Endothelial cell of umbilical vein (primary cell): ENCODE measurements at regions of chr17 and their contacts with region 1.

Region 1: GRCh38 chr17:80927791-80928216 is 63.8 kb upstream of the CHMP6 start:
- DNase-seq: peak; percentile 96
- H3K4me3 ChIP-seq: no peak overlapping the region
- H3K27ac ChIP-seq: peak overlapping the region; percentile 54
- H3K4me1 ChIP-seq: peaks cover 18% of the 10 kb centered on the region
- H3K27me3 ChIP-seq: no peaks in the 10 kb centered on the region
- CTCF ChIP-seq: peak; percentile 80 to 84
- POLR2A ChIP-seq: no peak

Region 2: GRCh38 chr17:80477647-80478478 is 449.9 kb before region 1 on chr17:
- CTCF ChIA-PET with region 1: interaction called, 14 read pairs
- POLR2A ChIA-PET with region 1: no interaction called
- dilution Hi-C with region 1: no loop called
- intact Hi-C with region 1: no loop called
- DNase-seq: peak; percentile 21
- H3K4me3 ChIP-seq: no peak overlapping the region
- H3K27ac ChIP-seq: no peak overlapping the region
- H3K4me1 ChIP-seq: no peaks in the 10 kb centered on the region
- H3K27me3 ChIP-seq: peaks cover 69 to 74% of the 10 kb centered on the region in 2 experiments
- CTCF ChIP-seq: peak; percentile 8 to 67
- POLR2A ChIP-seq: no peak

Region 3: GRCh38 chr17:80879723-80880647 is 47.8 kb before region 1 on chr17:
- CTCF ChIA-PET with region 1: no interaction called
- POLR2A ChIA-PET with region 1: no interaction called
- dilution Hi-C with region 1: no loop called
- intact Hi-C with region 1: no loop called
- DNase-seq: no peak
- H3K4me3 ChIP-seq: no peak overlapping the region
- H3K27ac ChIP-seq: no peak overlapping the region
- H3K4me1 ChIP-seq: no peaks in the 10 kb centered on the region
- H3K27me3 ChIP-seq: no peaks in the 10 kb centered on the region
- CTCF ChIP-seq: no peak
- POLR2A ChIP-seq: no peak

Region 4: DNA sequence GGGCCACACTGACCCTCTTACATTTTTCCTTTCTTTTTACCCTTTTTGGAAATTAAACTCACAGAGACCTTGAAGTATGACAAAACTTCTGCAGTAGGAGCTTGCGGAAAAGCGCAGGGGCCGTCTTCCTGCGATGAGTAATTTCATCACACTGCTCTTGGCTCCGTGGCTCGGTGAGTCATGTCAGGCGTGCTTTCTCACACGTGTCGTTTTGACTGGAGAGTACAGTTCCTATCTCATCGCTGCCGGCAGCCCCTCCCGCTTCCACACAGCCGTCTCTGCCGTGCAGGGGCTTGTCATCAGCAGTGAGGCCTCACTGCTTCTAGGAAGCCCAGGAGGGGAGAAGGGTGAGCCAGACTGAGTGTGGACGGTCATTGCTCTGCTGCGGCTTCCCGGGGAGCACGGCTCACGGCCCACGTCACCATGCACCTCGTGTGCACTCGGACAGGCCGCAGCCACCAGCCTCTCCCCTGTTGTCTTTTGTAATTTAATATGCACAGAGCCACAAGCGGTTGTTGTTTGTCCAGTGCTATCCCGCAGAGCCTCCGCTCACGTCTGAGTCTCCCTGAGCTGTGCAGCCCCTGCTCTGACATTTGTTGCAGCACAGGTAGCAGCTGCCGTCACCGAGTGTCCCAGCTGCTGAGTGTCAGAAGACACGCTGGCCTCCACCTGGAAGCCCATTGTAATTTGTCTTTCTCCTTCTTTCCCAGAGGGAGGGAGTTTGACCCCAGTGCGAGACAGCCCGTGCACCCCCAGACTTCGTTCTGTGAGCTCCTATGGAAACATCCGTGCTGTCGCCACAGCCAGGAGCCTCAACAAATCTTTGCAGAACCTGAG is 35.6 kb before region 1 on chr17:
- CTCF ChIA-PET with region 1: interaction called, 24 read pairs
- POLR2A ChIA-PET with region 1: no interaction called
- dilution Hi-C with region 1: no loop called
- intact Hi-C with region 1: loop called (anchors 1 kb)
- DNase-seq: peak; percentile 91
- H3K4me3 ChIP-seq: no peak overlapping the region
- H3K27ac ChIP-seq: peak overlapping the region; percentile 79
- H3K4me1 ChIP-seq: peaks cover 28% of the 10 kb centered on the region
- H3K27me3 ChIP-seq: no peaks in the 10 kb centered on the region
- CTCF ChIP-seq: no peak
- POLR2A ChIP-seq: no peak

Region 5: DNA sequence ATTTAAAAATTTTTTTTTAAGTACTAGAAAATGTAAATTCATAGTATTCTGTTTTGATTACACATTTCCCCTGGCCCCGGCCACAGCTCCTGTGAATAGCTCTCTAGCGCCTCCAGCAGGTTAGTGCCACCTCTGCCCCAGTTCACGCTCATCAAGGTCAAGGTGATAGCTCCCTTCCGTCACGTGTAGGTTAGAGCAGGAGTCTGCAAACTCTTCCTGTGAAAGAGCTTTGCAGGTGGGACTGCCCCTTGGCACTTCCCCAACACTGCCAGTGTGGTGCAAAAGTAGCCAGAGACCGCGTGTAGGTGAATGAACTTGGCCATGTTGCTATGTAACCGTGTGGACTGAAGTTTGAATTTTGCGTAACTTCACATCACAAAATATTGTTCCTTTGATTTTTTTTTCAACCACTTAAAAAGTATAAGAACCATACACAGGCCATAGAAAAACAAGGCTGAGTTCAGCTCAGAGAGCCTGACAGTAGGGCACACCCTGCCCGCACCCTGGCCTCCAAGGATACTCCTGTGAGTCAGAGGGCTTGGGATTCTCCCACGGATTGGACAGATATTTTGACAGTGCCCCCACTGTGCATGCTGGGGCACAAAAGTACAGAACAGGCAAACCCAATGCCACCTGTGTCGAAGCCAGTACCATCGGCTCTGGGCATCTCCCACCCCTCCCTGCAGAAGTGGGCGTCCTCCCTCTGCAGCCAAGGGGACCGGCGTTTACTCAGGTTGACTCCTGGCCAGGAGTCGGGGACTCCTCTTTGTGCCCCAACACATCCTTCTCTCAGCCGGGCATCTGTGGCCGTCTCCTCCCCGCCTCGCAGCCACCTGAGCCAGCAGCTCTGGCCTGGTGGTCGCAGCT is 28.2 kb before region 1 on chr17:
- CTCF ChIA-PET with region 1: interaction called, 32 read pairs
- POLR2A ChIA-PET with region 1: no interaction called
- dilution Hi-C with region 1: no loop called
- intact Hi-C with region 1: no loop called
- DNase-seq: peak; percentile 22
- H3K4me3 ChIP-seq: no peak overlapping the region
- H3K27ac ChIP-seq: no peak overlapping the region
- H3K4me1 ChIP-seq: peaks cover 18% of the 10 kb centered on the region
- H3K27me3 ChIP-seq: no peaks in the 10 kb centered on the region
- CTCF ChIP-seq: peak; percentile 53 to 69
- POLR2A ChIP-seq: no peak

Region 6: GRCh38 chr17:80938556-80938955 is 10.8 kb after region 1 on chr17:
- CTCF ChIA-PET with region 1: interaction called, 15 read pairs
- POLR2A ChIA-PET with region 1: no interaction called
- dilution Hi-C with region 1: no loop called
- intact Hi-C with region 1: no loop called
- DNase-seq: no peak
- H3K4me3 ChIP-seq: no peak overlapping the region
- H3K27ac ChIP-seq: no peak overlapping the region
- H3K4me1 ChIP-seq: no peaks in the 10 kb centered on the region
- H3K27me3 ChIP-seq: no peaks in the 10 kb centered on the region
- CTCF ChIP-seq: no peak
- POLR2A ChIP-seq: no peak